H1 (cell line): ENCODE measurements at regions of chr9 and their contacts with region 1.

Region 1: GRCh38 chr9:127890053-127890452 is 9.3 kb downstream of the ST6GALNAC6 start:
- DNase-seq: no peak
- H3K4me3 ChIP-seq: no peak overlapping the region
- H3K27ac ChIP-seq: no peak overlapping the region
- H3K4me1 ChIP-seq: no peaks in the 10 kb centered on the region
- H3K27me3 ChIP-seq: no peaks in the 10 kb centered on the region
- CTCF ChIP-seq: no peak
- EP300 ChIP-seq: no peak
- POLR2A ChIP-seq: no peak
- RAD21 ChIP-seq: no peak

Region 2: GRCh38 chr9:127910613-127911205 is 20.7 kb after region 1 on chr9:
- CTCF ChIA-PET with region 1: interaction called, 14 read pairs
- POLR2A ChIA-PET with region 1: interaction called, 5 read pairs
- DNase-seq: no peak
- H3K4me3 ChIP-seq: no peak overlapping the region
- H3K27ac ChIP-seq: no peak overlapping the region
- H3K4me1 ChIP-seq: no peaks in the 10 kb centered on the region; a peak in 2 of 7 replicates
- H3K27me3 ChIP-seq: peaks cover 0 to under 1% (median 0%) of the 10 kb centered on the region in 4 experiments; a peak in 2 of 7 replicates
- CTCF ChIP-seq: peak in 1 of 3 experiments; percentile 26; a peak in 1 of 4 replicates
- EP300 ChIP-seq: no peak
- POLR2A ChIP-seq: no peak
- RAD21 ChIP-seq: peak; percentile 35 to 44; a peak in 2 of 4 replicates

Region 3: GRCh38 chr9:128007566-128008138 is 117.6 kb after region 1 on chr9:
- CTCF ChIA-PET with region 1: no interaction called
- POLR2A ChIA-PET with region 1: no interaction called
- DNase-seq: no peak
- H3K4me3 ChIP-seq: no peak overlapping the region
- H3K27ac ChIP-seq: no peak overlapping the region
- H3K4me1 ChIP-seq: peaks cover 4 to 7% (median 6%) of the 10 kb centered on the region in 4 experiments; a peak in 6 of 7 replicates
- H3K27me3 ChIP-seq: no peaks in the 10 kb centered on the region
- CTCF ChIP-seq: no peak
- EP300 ChIP-seq: no peak
- POLR2A ChIP-seq: no peak
- RAD21 ChIP-seq: no peak

Region 4: DNA sequence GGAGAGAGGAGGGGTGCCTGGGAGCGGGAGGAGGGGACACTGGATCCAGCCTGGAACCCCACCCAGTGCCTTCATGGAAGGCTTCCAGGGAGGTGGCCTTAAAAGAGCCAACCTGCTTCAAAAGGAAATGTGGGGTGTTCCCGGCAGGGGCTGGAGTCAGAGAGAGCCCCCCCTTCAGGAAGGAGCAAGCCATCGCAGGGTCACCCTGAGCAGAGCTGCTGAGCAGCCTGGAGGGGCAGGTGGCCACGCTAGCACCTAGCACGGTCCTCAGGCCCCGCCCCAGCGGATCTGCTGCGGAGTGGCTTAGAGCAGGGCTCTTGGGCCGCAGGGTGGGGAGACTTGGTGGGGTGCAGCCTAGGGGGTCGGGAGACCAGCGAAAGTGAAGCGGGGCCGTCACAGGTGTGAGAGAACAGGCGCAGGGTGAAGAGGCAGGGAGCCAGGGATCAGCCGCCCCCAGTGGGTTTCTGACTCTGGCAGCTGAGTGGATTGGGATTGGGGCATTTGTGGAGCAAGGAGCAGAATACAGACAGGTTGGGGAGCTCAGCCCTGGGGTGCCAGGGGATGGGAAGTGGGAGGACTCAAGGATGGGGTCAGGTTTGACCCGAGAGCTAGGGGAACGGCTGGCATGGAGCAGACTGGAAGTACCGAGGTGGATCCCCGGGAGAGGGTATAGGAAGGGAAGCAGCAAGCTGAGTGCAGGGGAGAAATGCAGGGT is 260.7 kb after region 1 on chr9:
- CTCF ChIA-PET with region 1: no interaction called
- POLR2A ChIA-PET with region 1: no interaction called
- DNase-seq: peak in 1 of 2 experiments; percentile 86
- H3K4me3 ChIP-seq: peak overlapping the region in 1 of 4 experiments; percentile 10; a peak in 1 of 8 replicates
- H3K27ac ChIP-seq: no peak overlapping the region
- H3K4me1 ChIP-seq: peaks cover 0 to 8% (median 3%) of the 10 kb centered on the region in 4 experiments; a peak in 5 of 7 replicates
- H3K27me3 ChIP-seq: no peaks in the 10 kb centered on the region; a peak in 2 of 7 replicates
- CTCF ChIP-seq: peak in 2 of 3 experiments; percentile 83 to 87; a peak in 3 of 4 replicates
- EP300 ChIP-seq: no peak
- POLR2A ChIP-seq: no peak
- RAD21 ChIP-seq: peak; percentile 21 to 41; a peak in 2 of 4 replicates